Gastrocnemius medialis (tissue), 4 donors: ENCODE measurements at regions of chr18 and their contacts with region 1.

Region 1: DNA sequence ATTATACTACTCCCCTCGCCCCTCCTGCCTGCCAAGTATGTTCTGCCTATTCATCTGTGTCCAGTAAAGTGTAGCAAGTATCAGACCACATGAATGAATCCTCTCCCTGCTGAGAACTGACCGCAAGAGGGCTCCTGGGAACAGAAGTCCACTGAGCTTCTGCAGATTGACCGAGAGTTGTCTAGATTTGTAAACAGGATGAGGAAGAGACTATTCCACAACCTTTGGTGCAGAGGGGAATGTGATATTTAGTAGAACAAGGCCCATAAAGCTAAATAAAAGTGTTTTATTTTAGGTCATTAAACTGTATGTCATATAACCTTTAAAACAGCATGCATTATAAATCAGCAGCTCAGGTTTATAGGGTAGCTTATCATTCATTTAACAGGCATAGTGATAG is 377.0 kb downstream of the DCC start:
- DNase-seq: no peak
- ATAC-seq: no peak
- H3K4me3 ChIP-seq: no peak overlapping the region
- H3K27ac ChIP-seq: no peak overlapping the region
- H3K4me1 ChIP-seq: no peaks in the 10 kb centered on the region
- H3K27me3 ChIP-seq: no peaks in the 10 kb centered on the region
- CTCF ChIP-seq: no peak
- POLR2A ChIP-seq: no peak

Region 2: DNA sequence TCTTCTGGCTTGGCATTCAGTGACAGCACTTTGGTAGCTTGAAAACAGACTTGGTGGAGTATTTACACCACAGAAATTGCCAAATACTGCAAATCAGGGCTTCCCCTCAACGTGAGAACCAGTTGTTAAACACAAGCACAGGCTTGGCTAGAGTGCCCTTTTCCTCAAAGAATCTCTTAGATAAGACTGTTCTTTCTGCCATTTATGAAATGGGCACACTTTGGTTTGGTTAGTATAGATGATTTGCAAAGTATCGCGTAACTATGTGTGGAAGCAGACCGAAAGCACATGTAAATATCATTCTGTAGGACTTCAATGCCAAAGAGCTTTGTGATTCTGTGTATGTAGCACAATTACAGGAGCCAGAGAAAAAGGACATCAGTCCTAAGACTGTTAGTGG is 68.8 kb before region 1 on chr18:
- in situ Hi-C with region 1: no loop called
- intact Hi-C with region 1: no loop called
- DNase-seq: no peak
- ATAC-seq: no peak
- H3K4me3 ChIP-seq: no peak overlapping the region
- H3K27ac ChIP-seq: no peak overlapping the region
- H3K4me1 ChIP-seq: no peaks in the 10 kb centered on the region
- H3K27me3 ChIP-seq: no peaks in the 10 kb centered on the region
- CTCF ChIP-seq: no peak
- POLR2A ChIP-seq: no peak

Region 3: GRCh38 chr18:52813635-52814416 is 96.9 kb after region 1 on chr18:
- in situ Hi-C with region 1: loop called in 1 of 4 experiments (anchors 25 kb)
- intact Hi-C with region 1: no loop called
- DNase-seq: no peak
- ATAC-seq: no peak
- H3K4me3 ChIP-seq: no peak overlapping the region
- H3K27ac ChIP-seq: no peak overlapping the region
- H3K4me1 ChIP-seq: no peaks in the 10 kb centered on the region
- H3K27me3 ChIP-seq: no peaks in the 10 kb centered on the region
- CTCF ChIP-seq: no peak
- POLR2A ChIP-seq: no peak